ENCODE measurements at regions of chr11 and their contacts with region 1.

Region 1: GRCh38 chr11:17207317-17208258 is at the start of gene PIK3C2A:
- DNase-seq: peak; percentile 89 to 98
- H3K4me3 ChIP-seq: peak within 1 kb of the TSS; percentile 68 to 95
- H3K27ac ChIP-seq: peak within 1 kb of the TSS; percentile 85 to 94
- H3K4me1 ChIP-seq: peaks cover 0 to 10% of the 10 kb centered on the region in 2 donors
- H3K27me3 ChIP-seq: no peaks in the 10 kb centered on the region
- CTCF ChIP-seq: no peak
- total RNA-seq, gene PIK3C2A: 56.6 TPM

Region 2: GRCh38 chr11:16791191-16791961 is 416.2 kb before region 1 on chr11:
- intact Hi-C with region 1: loop called (anchors 5 kb)
- DNase-seq: peak; percentile 49 to 89
- H3K4me3 ChIP-seq: no peak overlapping the region
- H3K27ac ChIP-seq: peak overlapping the region; percentile 76 to 84
- H3K4me1 ChIP-seq: peaks cover 24 to 36% of the 10 kb centered on the region in 2 donors
- H3K27me3 ChIP-seq: no peaks in the 10 kb centered on the region
- CTCF ChIP-seq: no peak

Region 3: DNA sequence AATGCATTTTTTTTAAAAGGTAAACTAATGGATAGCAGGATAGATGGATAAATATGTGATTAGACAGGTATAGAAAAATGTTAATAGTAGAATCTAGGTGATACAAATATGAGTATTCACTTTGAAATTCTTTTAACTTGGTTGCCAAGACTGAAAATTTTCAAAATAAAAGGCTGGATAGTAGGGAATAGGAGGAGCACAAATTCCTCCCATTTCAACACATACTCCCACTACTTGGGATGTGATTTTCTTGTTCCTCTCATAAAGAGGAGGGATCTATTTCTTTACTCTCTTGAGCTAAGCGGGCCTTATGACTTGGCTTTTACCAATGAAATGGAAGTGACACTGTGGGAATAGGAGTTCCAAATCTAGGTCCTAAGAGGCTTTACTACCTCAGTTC is 35.7 kb before region 1 on chr11:
- intact Hi-C with region 1: loop called (anchors 5 kb)
- DNase-seq: no peak
- H3K4me3 ChIP-seq: no peak overlapping the region
- H3K27ac ChIP-seq: peak overlapping the region; percentile 24 to 42
- H3K4me1 ChIP-seq: peaks cover 3 to 5% of the 10 kb centered on the region in 2 donors
- H3K27me3 ChIP-seq: no peaks in the 10 kb centered on the region
- CTCF ChIP-seq: no peak

Region 4: DNA sequence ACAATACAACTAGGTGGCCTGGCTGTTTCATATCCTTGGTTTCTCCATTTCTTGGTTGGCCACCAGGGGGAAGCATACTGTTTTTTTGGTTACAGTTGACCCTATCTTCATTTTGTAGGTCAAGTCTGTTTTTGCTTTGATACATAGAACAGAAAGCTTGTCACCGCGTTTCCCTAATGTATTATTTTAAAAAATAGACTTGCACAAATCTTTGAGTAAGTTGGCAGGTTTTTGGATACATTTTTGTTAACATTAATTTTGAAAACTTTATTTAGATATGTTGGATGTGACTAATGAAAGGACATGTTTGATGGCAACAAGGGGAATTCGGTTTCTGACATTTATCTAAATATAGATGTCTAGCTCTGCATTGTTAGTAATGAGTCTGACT is 147.0 kb after region 1 on chr11:
- intact Hi-C with region 1: loop called (anchors 5 kb)
- DNase-seq: peak in 1 of 2 donors; percentile 86
- H3K4me3 ChIP-seq: peak overlapping the region in 1 of 2 donors; percentile 98
- H3K27ac ChIP-seq: no peak overlapping the region
- H3K4me1 ChIP-seq: peaks cover 0 to 7% of the 10 kb centered on the region in 2 donors
- H3K27me3 ChIP-seq: no peaks in the 10 kb centered on the region
- CTCF ChIP-seq: peak; percentile 39 to 57 (median 53)

Measured in ascending aorta (tissue), 2 donors.